Endothelial cell of umbilical vein (primary cell): ENCODE measurements at regions of chr2 and their contacts with region 1.

Region 1: GRCh38 chr2:1769703-1770422 is 25.5 kb upstream of the PXDN start:
- DNase-seq: peak; percentile 51
- H3K4me3 ChIP-seq: no peak overlapping the region
- H3K27ac ChIP-seq: no peak overlapping the region
- H3K4me1 ChIP-seq: no peaks in the 10 kb centered on the region
- H3K27me3 ChIP-seq: no peaks in the 10 kb centered on the region
- CTCF ChIP-seq: peak; percentile 80
- POLR2A ChIP-seq: no peak

Region 2: DNA sequence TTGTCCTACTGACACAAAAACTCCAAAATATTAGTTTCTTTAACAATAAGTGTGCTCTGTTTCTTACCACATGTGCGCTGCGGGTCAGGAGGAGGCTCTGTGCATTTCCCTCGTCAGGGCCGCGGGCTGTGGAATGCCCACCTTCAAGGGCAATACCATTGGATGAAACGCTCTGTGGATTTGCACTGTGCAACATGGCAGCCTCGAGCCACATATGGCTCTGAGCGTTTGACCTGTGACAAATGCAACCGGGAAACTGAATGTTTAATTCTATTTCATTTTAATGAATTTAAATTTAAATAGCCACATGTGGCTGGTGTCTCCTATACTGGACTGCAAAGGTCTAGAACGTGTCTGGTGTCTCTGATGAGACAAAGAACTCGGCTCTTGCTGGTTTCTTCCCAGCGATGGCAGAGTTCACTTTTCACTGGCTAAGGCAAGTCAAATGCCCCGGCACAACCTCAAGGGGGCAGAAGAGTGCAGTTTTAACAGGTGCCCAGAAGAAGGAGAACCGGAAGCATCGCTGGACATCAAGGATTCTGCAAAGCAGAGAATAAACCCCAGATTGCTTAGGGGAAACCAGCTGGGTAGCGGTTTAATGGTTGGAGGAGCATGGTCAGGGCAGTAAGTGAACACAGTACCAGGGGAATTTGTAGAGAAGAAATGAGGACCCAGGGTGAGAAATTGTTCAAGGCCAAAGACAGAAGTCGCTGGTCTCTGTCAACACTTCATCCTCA is 1055.7 kb before region 1 on chr2:
- CTCF ChIA-PET with region 1: interaction called, 16 read pairs
- POLR2A ChIA-PET with region 1: no interaction called
- dilution Hi-C with region 1: no loop called
- intact Hi-C with region 1: no loop called
- DNase-seq: peak; percentile 8
- H3K4me3 ChIP-seq: no peak overlapping the region
- H3K27ac ChIP-seq: no peak overlapping the region
- H3K4me1 ChIP-seq: no peaks in the 10 kb centered on the region
- H3K27me3 ChIP-seq: no peaks in the 10 kb centered on the region
- CTCF ChIP-seq: peak; percentile 37 to 52
- POLR2A ChIP-seq: no peak